ENCODE measurements at regions of chr17 and their contacts with region 1.

Region 1: DNA sequence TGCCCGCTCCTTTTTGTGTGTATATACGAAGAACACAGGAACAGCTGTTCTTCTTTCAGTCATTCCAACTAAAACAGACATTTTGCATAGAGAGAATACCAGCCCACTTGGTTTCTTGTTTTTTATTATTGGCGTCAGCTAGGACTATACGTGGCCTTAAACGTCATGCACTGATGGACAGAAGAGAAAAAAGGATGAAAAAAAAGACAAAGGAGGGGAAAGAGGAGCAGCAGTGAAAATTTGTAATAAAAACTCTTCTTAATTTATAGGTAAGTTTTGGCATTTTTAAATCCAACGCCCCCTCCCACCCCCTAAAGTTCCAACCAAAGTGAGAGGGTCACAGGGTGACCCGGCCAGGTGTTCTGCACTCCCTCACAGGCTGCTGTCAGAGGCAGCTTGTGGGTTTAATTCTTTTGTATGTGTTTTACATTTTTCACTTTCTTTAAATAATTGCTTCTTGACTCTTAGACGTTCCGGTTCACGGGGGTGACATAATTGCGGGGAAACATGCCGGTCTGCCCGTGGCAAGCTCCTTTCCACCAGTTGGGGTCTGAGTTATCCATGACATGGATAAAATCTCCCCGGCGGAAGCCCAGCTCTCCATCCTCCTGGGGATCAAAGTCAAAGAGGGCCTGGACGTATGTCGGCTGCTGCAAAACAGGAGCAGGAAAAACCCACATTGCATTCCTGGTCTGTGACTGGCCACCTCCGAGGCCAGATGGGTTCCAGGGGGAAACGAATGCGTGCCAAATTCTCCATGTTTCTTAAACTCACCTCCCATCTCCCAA is 30.9 kb upstream of the SLC25A19 start:
- DNase-seq: no peak
- ATAC-seq: peak; percentile 53
- H3K4me3 Mint-ChIP-seq: peak overlapping the region; percentile 70
- H3K27ac Mint-ChIP-seq: peak overlapping the region; percentile 93
- H3K4me1 Mint-ChIP-seq: peaks cover 87% of the 10 kb centered on the region
- H3K27me3 Mint-ChIP-seq: no peaks in the 10 kb centered on the region
- CTCF ChIP-seq: no peak

Region 2: GRCh38 chr17:75173526-75173925 is 146.6 kb before region 1 on chr17:
- CTCF ChIA-PET with region 1: no interaction called
- POLR2A ChIA-PET with region 1: no interaction called
- intact Hi-C with region 1: no loop called
- DNase-seq: no peak
- ATAC-seq: no peak
- H3K4me3 Mint-ChIP-seq: no peak overlapping the region
- H3K27ac Mint-ChIP-seq: peak overlapping the region; percentile 46
- H3K4me1 Mint-ChIP-seq: peaks cover 16% of the 10 kb centered on the region
- H3K27me3 Mint-ChIP-seq: no peaks in the 10 kb centered on the region
- CTCF ChIP-seq: no peak

Region 3: DNA sequence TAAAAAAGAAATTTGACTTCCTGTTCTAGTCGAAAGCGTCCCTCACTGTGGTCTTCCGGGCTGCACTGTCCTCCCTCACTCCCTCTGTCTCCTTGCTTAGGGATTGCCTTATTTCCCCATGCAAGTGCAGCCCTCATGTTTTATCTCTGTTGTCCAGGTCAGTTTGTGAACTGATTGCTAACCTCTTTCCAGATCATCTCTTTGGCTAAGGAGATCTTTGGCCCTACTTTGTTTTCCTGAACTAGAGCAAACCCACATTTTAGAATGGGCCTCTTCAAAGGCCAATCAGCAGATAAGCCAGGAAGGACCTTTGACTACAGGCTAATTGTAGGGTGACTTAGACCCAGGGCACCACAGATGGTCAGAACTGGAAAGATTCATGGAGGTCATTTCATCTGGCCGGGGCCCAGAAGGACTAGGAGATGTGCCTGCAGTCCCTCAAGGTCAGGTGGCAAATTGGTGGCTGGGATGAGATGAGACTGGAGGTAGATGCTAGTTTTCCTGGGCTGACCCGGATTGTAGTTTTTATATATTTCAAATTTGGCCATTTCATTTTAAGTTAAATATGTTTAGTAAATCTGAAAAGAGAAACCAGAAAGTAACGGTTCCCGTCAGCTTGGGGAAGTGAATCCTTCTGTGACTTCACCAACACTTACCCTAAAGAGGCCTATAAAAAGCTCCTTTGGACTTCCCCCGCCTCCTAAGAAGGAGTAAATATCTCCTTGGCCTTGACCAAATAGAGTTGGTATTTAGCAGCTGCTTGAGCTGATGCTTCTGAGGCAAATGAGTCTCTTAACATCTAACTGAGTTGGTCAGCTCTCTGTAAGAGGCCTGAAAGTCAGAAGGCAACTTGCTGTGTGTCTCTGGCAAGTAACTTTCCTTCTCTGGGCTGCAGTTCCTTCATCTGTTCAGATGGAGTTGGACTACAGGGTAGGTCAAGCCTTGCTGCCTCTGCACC is 24.6 kb before region 1 on chr17:
- CTCF ChIA-PET with region 1: interaction called, 54 read pairs
- POLR2A ChIA-PET with region 1: interaction called, 1,048 read pairs
- intact Hi-C with region 1: loop called (anchors 1 kb)
- DNase-seq: peak; percentile 46
- ATAC-seq: peak; percentile 64
- H3K4me3 Mint-ChIP-seq: peak overlapping the region; percentile 76
- H3K27ac Mint-ChIP-seq: peak overlapping the region; percentile 100
- H3K4me1 Mint-ChIP-seq: peaks cover 77% of the 10 kb centered on the region
- H3K27me3 Mint-ChIP-seq: no peaks in the 10 kb centered on the region
- CTCF ChIP-seq: no peak

Region 4: DNA sequence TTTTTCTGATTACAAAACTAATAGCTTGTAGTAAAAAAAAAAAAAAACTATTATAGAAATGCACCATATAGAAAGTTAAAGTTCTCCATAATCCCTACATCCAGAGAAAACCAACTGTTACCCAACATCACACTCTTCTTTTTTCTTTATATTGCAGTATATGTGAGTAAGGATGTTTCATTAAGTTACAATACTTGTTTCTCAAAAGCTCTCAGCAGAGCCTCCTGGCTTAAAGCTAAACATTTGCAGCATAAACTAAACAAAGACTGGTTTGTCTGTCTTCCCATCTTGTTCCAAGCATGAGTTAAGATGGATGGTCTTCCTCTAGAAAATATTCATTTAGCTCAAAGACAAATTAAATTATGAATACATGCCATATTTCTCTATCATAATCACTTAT is 60.2 kb after region 1 on chr17:
- CTCF ChIA-PET with region 1: interaction called, 16 read pairs
- POLR2A ChIA-PET with region 1: interaction called, 9 read pairs
- intact Hi-C with region 1: no loop called
- DNase-seq: no peak
- ATAC-seq: no peak
- H3K4me3 Mint-ChIP-seq: no peak overlapping the region
- H3K27ac Mint-ChIP-seq: no peak overlapping the region
- H3K4me1 Mint-ChIP-seq: peaks cover 84% of the 10 kb centered on the region
- H3K27me3 Mint-ChIP-seq: no peaks in the 10 kb centered on the region
- CTCF ChIP-seq: no peak

Region 5: DNA sequence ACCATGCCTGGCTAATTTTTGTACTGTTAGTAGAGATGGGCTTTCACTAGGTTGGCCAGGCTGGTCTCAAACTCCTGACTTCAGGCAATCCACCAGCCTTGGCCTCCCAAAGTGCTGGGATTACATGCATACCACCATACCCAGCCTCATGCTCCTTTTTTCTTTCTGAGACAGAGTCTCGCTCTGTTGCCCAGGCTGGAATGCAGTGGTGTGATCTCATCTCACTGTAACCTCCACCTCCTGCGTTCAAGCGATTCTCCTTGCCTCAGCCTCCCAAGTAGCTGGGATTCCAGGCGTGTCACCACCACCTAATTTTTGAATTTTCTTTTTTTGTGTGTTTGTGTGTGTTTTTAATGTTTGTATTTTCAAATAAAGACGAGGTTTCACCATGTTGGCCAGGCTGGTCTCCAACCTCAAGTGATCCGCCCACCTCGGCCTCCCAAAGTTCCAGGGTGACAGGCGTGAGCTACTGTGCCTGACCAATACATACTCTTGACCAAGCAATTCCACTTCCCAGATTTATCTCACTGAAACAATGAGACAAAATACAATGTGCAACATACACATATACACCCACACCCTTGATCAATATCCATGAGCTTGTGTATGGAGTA is 80.3 kb after region 1 on chr17:
- CTCF ChIA-PET with region 1: interaction called, 25 read pairs
- POLR2A ChIA-PET with region 1: interaction called, 101 read pairs
- intact Hi-C with region 1: loop called (anchors 1 kb)
- DNase-seq: no peak
- ATAC-seq: no peak
- H3K4me3 Mint-ChIP-seq: peak overlapping the region; percentile 19
- H3K27ac Mint-ChIP-seq: peak overlapping the region; percentile 30
- H3K4me1 Mint-ChIP-seq: peaks cover 72% of the 10 kb centered on the region
- H3K27me3 Mint-ChIP-seq: no peaks in the 10 kb centered on the region
- CTCF ChIP-seq: no peak

Measured in activated B cell treated with CpG ODN at 0.5 μM for 24 hours (primary cell).